CD14-positive monocyte (primary cell): ENCODE measurements at regions of chr13 and their contacts with region 1.

Region 1: DNA sequence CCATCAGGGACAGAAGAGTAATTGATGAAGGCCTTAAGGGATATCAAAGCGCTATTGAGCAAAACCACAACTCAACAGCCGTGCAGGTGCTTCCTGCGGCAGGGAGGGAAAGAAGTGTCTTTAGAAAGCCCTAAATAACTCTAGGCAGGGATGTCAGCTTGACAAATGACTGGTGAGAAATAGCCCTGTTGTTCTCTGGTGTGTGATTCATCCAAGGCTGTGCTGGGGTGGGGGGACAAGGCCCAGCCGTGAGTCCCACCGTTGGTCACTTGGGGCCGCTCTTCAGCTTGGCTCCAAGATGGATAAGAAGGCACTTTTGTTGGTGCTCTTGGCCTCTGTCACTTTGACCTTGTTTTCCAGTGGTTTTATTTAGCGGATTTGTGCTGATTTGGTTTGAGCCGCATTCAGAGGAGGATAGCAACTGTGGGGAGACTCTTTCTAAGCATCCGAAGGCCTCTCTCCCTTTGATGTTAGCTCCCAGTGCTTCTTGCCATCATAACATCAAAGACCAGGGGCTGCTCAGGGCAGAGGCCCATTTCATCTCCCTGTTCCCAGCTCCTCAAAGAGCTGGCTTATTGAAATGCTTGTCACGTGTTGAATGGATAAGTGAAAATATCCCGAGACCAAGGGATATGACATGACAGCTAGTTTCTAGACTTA is 130.3 kb upstream of the SERP2 start:
- DNase-seq: peak; percentile 63 to 79 (median 72)
- H3K4me3 ChIP-seq: no peak overlapping the region
- H3K4me3 Mint-ChIP-seq: no peak overlapping the region
- H3K27ac ChIP-seq: no peak overlapping the region
- H3K27ac Mint-ChIP-seq: peak overlapping the region in 3 of 7 donors; percentile 27 to 70 (median 34)
- H3K4me1 ChIP-seq: no peaks in the 10 kb centered on the region
- H3K4me1 Mint-ChIP-seq: peaks cover 11% of the 10 kb centered on the region
- H3K27me3 ChIP-seq: no peaks in the 10 kb centered on the region
- H3K27me3 Mint-ChIP-seq: peaks cover 6 to 12% (median 9%) of the 10 kb centered on the region in 3 donors
- CTCF ChIP-seq: peak; percentile 62

Region 2: DNA sequence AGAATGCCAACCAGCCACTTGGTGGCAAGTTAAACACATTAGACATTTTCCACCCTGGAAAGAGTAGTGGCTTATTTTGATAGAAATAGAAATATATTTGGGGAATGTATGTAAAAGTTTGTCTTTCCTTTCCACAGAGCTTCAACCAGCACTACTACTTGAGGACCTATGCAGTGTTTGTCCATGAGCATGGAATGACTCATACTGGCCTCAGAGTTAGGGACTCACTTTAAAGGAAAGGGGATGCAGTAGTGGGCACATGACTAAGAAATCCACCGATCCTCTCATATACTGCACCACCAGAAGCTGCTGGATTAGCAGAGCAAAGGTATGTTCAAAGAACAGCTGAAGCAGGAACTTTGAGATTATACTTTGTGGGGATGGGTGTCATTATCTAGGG is 301.0 kb before region 1 on chr13:
- intact Hi-C with region 1: no loop called
- DNase-seq: no peak
- H3K4me3 ChIP-seq: no peak overlapping the region
- H3K4me3 Mint-ChIP-seq: peak overlapping the region in 1 of 2 donors; percentile 51
- H3K27ac ChIP-seq: no peak overlapping the region
- H3K27ac Mint-ChIP-seq: no peak overlapping the region
- H3K4me1 ChIP-seq: no peaks in the 10 kb centered on the region
- H3K4me1 Mint-ChIP-seq: no peaks in the 10 kb centered on the region
- H3K27me3 ChIP-seq: peaks cover 59 to 71% of the 10 kb centered on the region in 2 donors
- H3K27me3 Mint-ChIP-seq: peaks cover 46 to 71% (median 48%) of the 10 kb centered on the region in 3 donors
- CTCF ChIP-seq: no peak

Region 3: GRCh38 chr13:44274452-44275205 is 31.3 kb after region 1 on chr13:
- intact Hi-C with region 1: loop called in 1 of 2 experiments (anchors 5 kb)
- DNase-seq: peak; percentile 63 to 75 (median 74)
- H3K4me3 ChIP-seq: peak overlapping the region; percentile 17 to 45 (median 45)
- H3K4me3 Mint-ChIP-seq: peak overlapping the region; percentile 31 to 79
- H3K27ac ChIP-seq: peak overlapping the region in 1 of 2 donors; percentile 72
- H3K27ac Mint-ChIP-seq: peak overlapping the region; percentile 69 to 85 (median 72)
- H3K4me1 ChIP-seq: peaks cover 10 to 16% of the 10 kb centered on the region in 2 donors
- H3K4me1 Mint-ChIP-seq: peaks cover 16% of the 10 kb centered on the region
- H3K27me3 ChIP-seq: no peaks in the 10 kb centered on the region
- H3K27me3 Mint-ChIP-seq: peaks cover 1 to 4% (median 2%) of the 10 kb centered on the region in 3 donors
- CTCF ChIP-seq: no peak

Region 4: GRCh38 chr13:44843403-44843802 is 600.1 kb after region 1 on chr13:
- intact Hi-C with region 1: no loop called
- DNase-seq: peak; percentile 1 to 37 (median 15)
- H3K4me3 ChIP-seq: no peak overlapping the region
- H3K4me3 Mint-ChIP-seq: peak overlapping the region in 1 of 2 donors; percentile 27
- H3K27ac ChIP-seq: no peak overlapping the region
- H3K27ac Mint-ChIP-seq: peak overlapping the region in 3 of 7 donors; percentile 9 to 78 (median 67)
- H3K4me1 ChIP-seq: peaks cover 12 to 24% of the 10 kb centered on the region in 2 donors
- H3K4me1 Mint-ChIP-seq: peaks cover 28% of the 10 kb centered on the region
- H3K27me3 ChIP-seq: no peaks in the 10 kb centered on the region
- H3K27me3 Mint-ChIP-seq: peaks cover 5 to 16% (median 12%) of the 10 kb centered on the region in 3 donors
- CTCF ChIP-seq: no peak